ENCODE measurements at regions of chr11 and their contacts with region 1.

Region 1: GRCh38 chr11:10792398-10792975 is 16.2 kb downstream of the EIF4G2 start:
- DNase-seq: peak; percentile 72
- ATAC-seq: peak; percentile 99
- H3K4me3 ChIP-seq: no peak overlapping the region
- H3K27ac ChIP-seq: no peak overlapping the region
- H3K4me1 ChIP-seq: peaks cover 0 to 8% of the 10 kb centered on the region in 2 experiments; a peak in 3 of 4 replicates
- H3K27me3 ChIP-seq: no peaks in the 10 kb centered on the region
- CTCF ChIP-seq: peak; percentile 91 to 95 (median 95)
- POLR2A ChIP-seq: no peak
- RAD21 ChIP-seq: peak; percentile 99

Region 2: DNA sequence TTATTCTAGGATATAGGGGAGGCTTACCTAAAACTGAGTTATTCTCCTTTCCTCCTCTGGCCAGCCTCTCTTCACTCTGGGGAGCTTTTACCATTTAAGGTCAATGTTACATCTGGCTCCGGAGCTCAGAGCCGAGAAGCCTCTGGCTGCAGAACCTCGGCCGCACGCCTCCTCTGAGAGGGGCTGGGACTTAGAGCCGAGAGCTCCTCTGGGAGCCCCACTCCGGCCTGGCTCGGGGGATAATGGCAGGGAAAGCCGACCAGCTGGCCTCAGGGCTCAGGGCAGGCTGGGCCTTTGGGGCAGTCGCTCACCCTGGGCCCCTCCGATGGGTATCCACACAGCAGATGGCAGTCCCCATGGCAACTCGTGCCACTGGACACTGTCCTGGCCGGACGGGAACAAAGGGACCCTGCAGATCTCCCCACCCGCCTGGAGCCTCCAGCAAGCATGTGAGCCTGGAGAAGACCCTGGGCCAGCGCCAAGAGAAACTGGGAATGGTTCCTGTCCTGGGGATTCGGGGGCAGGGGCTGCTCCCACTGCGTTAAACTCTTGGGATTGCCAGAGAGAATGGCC is 98.9 kb before region 1 on chr11 and contains the start of gene IRAG1:
- CTCF ChIA-PET with region 1: no interaction called
- POLR2A ChIA-PET with region 1: no interaction called
- RAD21 ChIA-PET with region 1: no interaction called
- intact Hi-C with region 1: no loop called
- DNase-seq: no peak
- ATAC-seq: no peak
- H3K4me3 ChIP-seq: no peak within 1 kb of the TSS
- H3K27ac ChIP-seq: no peak within 1 kb of the TSS; the same call in 1 of the 2 replicates
- H3K4me1 ChIP-seq: peaks cover 5 to 52% of the 10 kb centered on the region in 2 experiments
- H3K27me3 ChIP-seq: no peaks in the 10 kb centered on the region
- CTCF ChIP-seq: no peak
- POLR2A ChIP-seq: no peak
- RAD21 ChIP-seq: no peak
- total RNA-seq, gene IRAG1: 3.7 TPM

Region 3: GRCh38 chr11:10770626-10771254 is 21.7 kb before region 1 on chr11:
- CTCF ChIA-PET with region 1: interaction called, 12 read pairs
- POLR2A ChIA-PET with region 1: no interaction called
- RAD21 ChIA-PET with region 1: no interaction called
- intact Hi-C with region 1: no loop called
- DNase-seq: peak; percentile 29
- ATAC-seq: peak; percentile 80
- H3K4me3 ChIP-seq: no peak overlapping the region
- H3K27ac ChIP-seq: no peak overlapping the region; the same call in 1 of the 2 replicates
- H3K4me1 ChIP-seq: no peaks in the 10 kb centered on the region
- H3K27me3 ChIP-seq: no peaks in the 10 kb centered on the region
- CTCF ChIP-seq: peak; percentile 57 to 89 (median 84); a peak in 5 of 6 replicates
- POLR2A ChIP-seq: no peak
- RAD21 ChIP-seq: peak; percentile 66

Region 4: GRCh38 chr11:10808553-10809372 is 16.3 kb after region 1 on chr11 and contains the start of gene EIF4G2:
- CTCF ChIA-PET with region 1: interaction called, 15 read pairs
- POLR2A ChIA-PET with region 1: interaction called, 19 read pairs
- RAD21 ChIA-PET with region 1: no interaction called
- intact Hi-C with region 1: no loop called
- DNase-seq: peak; percentile 95
- ATAC-seq: peak; percentile 94
- H3K4me3 ChIP-seq: peak within 1 kb of the TSS; percentile 89 to 97
- H3K27ac ChIP-seq: peak within 1 kb of the TSS; percentile 100
- H3K4me1 ChIP-seq: peaks cover 10 to 24% of the 10 kb centered on the region in 2 experiments
- H3K27me3 ChIP-seq: no peaks in the 10 kb centered on the region
- CTCF ChIP-seq: no peak
- POLR2A ChIP-seq: peak; percentile 99
- RAD21 ChIP-seq: no peak
- total RNA-seq, gene EIF4G2: 888 TPM

Region 5: GRCh38 chr11:11022125-11022730 is 229.7 kb after region 1 on chr11:
- CTCF ChIA-PET with region 1: interaction called, 25 read pairs
- POLR2A ChIA-PET with region 1: interaction called, 4 read pairs
- RAD21 ChIA-PET with region 1: interaction called in 1 of 2 experiments, 7 read pairs
- intact Hi-C with region 1: loop called (anchors 1 kb)
- DNase-seq: peak; percentile 12
- ATAC-seq: peak; percentile 72
- H3K4me3 ChIP-seq: no peak overlapping the region
- H3K27ac ChIP-seq: no peak overlapping the region
- H3K4me1 ChIP-seq: 0 out of 4 replicates have a peak, but pooled peaks cover 0 to 3% of the 10 kb centered on the region in 2 experiments
- H3K27me3 ChIP-seq: no peaks in the 10 kb centered on the region
- CTCF ChIP-seq: peak; percentile 21 to 62 (median 45); a peak in 4 of 6 replicates
- POLR2A ChIP-seq: no peak
- RAD21 ChIP-seq: peak; percentile 78

Region 6: GRCh38 chr11:11078344-11079086 is 286.0 kb after region 1 on chr11:
- CTCF ChIA-PET with region 1: no interaction called
- POLR2A ChIA-PET with region 1: no interaction called
- RAD21 ChIA-PET with region 1: no interaction called
- intact Hi-C with region 1: loop called (anchors 5 kb)
- DNase-seq: no peak
- ATAC-seq: no peak
- H3K4me3 ChIP-seq: no peak overlapping the region
- H3K27ac ChIP-seq: no peak overlapping the region
- H3K4me1 ChIP-seq: no peaks in the 10 kb centered on the region
- H3K27me3 ChIP-seq: no peaks in the 10 kb centered on the region
- CTCF ChIP-seq: peak in 1 of 3 experiments; percentile 26; a peak in 1 of 6 replicates
- POLR2A ChIP-seq: no peak
- RAD21 ChIP-seq: peak; percentile 36